ENCODE measurements at regions of chr19 and their contacts with region 1.

Region 1: DNA sequence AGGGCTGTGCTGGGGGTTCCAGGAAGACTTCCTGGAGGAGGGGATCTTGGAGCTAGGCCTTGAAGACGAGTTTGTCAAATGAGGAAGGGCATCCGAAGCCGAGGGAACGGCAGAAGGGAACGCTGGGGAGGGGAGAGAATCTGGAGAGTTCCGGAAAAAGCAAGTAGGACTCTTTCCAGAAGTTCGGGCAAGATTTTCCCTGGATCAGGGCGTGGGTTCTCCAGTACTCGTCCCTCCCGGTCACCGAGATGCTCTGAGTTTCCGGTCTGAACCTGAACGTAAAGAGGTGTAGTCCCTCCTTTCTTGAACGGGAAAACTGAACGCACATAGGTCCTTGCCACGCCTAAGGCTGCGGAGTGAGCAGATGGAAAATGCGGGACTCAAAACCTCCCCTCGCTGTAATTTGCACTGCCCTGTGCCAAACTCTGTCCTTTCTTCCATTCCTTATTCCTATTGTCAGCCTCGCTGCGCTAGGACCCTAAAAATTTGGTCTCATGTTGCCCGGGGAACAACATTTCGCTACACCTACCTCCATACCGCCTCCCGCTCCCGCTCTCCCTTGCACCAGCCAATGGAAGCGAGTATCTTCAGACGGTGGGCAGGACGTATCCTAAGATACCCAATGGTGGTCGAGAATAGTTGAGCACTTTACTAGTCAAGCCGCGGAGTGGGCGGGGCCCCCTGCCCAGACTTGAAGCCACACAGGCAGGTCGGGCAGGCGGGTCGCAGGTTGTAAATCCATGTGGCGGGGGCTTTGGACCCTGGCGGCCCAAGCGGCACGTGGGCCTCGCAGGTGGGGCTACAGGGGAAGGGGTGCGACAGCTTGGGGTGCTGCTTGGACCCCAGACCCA is at the start of gene GTPBP3:
- DNase-seq: peak; percentile 96 to 98
- H3K4me3 ChIP-seq: peak within 1 kb of the TSS; percentile 59
- H3K4me3 Mint-ChIP-seq: peak within 1 kb of the TSS; percentile 85
- H3K27ac Mint-ChIP-seq: peak within 1 kb of the TSS; percentile 97
- H3K4me1 ChIP-seq: 0 out of 2 replicates have a peak, but pooled peaks cover 9% of the 10 kb centered on the region
- H3K4me1 Mint-ChIP-seq: no peaks in the 10 kb centered on the region
- H3K27me3 ChIP-seq: no peaks in the 10 kb centered on the region
- H3K27me3 Mint-ChIP-seq: no peaks in the 10 kb centered on the region
- CTCF ChIP-seq: no peak
- total RNA-seq, gene GTPBP3: 50.1 and 50.7 TPM in 2 replicates

Region 2: DNA sequence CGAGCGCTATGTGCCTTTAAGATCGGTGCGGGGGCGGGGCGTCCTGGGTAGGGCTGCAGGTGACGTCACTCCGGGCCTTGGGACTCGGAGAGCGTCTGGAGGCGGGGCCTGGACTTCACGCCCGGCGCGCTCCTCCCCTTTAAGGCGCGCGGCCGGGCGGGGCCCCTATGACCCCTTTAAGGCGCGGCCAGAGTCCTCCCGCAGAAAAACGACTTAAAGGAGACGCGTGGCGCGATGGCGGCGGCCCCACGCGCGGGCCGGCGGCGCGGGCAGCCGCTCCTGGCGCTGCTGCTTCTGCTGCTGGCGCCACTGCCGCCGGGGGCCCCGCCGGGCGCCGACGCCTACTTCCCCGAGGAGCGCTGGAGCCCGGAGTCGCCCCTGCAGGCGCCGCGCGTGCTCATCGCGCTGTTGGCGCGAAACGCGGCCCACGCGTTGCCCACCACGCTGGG is 218.4 kb after region 1 on chr19 and contains the start of gene COLGALT1:
- CTCF ChIA-PET with region 1: no interaction called
- POLR2A ChIA-PET with region 1: no interaction called
- intact Hi-C with region 1: loop called (anchors 5 kb)
- DNase-seq: peak; percentile 96 to 97
- H3K4me3 ChIP-seq: peak within 1 kb of the TSS; percentile 95
- H3K4me3 Mint-ChIP-seq: peak within 1 kb of the TSS; percentile 77
- H3K27ac Mint-ChIP-seq: peak within 1 kb of the TSS; percentile 53
- H3K4me1 ChIP-seq: 0 out of 2 replicates have a peak, but pooled peaks cover 9% of the 10 kb centered on the region
- H3K4me1 Mint-ChIP-seq: peaks cover 13% of the 10 kb centered on the region
- H3K27me3 ChIP-seq: no peaks in the 10 kb centered on the region
- H3K27me3 Mint-ChIP-seq: no peaks in the 10 kb centered on the region
- CTCF ChIP-seq: no peak
- total RNA-seq, gene COLGALT1: 80.1 and 81.9 TPM in 2 replicates